GM10248 (cell line): ENCODE measurements at regions of chr5 and their contacts with region 1.

Region 1: DNA sequence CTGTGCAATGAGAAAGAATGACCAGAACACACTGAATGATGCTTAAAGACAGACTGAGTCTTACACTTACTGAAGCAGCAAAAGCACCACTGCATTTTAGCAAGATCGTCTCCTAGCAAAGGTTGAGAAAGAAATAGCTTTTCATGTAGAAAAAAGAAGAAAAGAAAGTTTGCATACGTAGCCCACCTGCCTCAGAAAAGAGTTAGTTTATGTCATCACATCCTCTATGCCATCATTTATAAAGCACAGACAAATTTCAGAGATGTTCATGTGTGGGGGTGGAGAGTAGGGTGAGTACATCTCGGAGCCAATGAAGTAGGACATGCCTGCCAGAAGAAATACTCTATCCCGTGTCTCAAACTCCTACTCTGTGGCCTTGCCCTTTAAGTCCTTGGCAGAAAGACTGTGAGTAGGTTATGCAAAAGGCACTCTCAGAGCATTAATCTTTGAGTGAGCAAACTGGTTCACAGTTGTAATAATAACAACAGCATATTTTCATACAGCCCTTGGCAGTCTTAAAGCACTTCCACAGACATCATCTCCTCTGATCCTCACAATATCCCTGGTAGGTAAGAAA is 22.4 kb downstream of the NRG2 start:
- DNase-seq: no peak
- CTCF ChIP-seq: no peak

Region 2: DNA sequence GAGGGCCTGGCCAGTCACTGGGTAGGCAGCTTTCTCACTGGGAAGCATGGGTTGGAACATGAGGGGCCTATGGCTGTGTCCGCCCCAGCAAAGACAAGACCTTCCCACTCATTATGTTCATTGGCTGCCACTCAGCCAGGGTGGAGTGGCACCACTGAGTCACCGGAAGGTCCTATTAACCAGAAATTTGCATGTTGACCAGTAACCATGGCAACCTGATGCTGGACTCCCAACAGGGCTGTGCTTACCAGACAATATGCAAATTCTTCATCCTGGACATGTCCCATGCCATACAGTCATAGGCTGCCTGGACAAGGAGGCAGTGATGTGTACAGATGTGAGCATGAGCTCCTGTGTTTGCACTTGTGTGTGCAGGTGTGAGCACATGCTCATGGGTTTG is 158.4 kb before region 1 on chr5:
- CTCF ChIA-PET with region 1: no interaction called
- POLR2A ChIA-PET with region 1: no interaction called
- DNase-seq: no peak
- CTCF ChIP-seq: no peak

Region 3: GRCh38 chr5:140035881-140036280 is 15.2 kb after region 1 on chr5:
- CTCF ChIA-PET with region 1: interaction called, 38 read pairs
- POLR2A ChIA-PET with region 1: no interaction called
- DNase-seq: no peak
- CTCF ChIP-seq: no peak